CD4-positive, alpha-beta T cell (primary cell): ENCODE measurements at regions of chr22 and their contacts with region 1.

Region 1: DNA sequence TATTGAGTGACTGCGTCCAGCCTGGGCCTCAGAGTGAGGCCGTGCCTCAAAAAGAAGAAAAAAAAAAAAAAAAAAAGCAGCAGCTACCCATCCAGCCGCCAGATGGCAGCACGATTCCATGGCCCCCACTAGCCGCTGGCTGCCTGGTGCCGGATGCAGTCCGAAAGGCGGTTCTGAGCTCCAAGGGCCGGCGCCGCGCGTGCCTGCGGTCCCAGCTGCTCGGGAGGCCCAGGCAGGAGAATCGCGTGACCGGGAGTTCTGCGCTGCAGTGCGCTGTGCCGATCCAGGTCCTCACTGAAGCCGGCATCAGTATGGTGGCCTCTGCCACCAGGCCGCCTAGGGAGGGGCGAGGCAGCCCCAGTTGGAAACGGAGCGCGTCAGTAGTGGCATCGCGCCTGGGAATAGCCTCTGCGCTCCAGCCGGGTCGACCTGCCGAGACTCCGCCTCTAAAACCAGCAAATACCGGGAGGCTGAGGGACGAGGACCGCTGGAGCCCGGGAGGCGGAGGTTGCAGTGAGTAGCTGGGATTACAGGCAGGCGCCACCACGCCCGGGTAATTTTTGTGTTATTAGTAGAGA is 19.3 kb downstream of the SCARF2 start:
- DNase-seq: peak; percentile 58 to 90 (median 69)
- ATAC-seq: peak; percentile 84
- H3K4me3 ChIP-seq: peak overlapping the region; percentile 46
- H3K4me3 Mint-ChIP-seq: peak overlapping the region; percentile 60
- H3K27ac ChIP-seq: no peak overlapping the region
- H3K27ac Mint-ChIP-seq: no peak overlapping the region
- H3K4me1 ChIP-seq: peaks cover 10% of the 10 kb centered on the region
- H3K4me1 Mint-ChIP-seq: peaks cover under 1% of the 10 kb centered on the region
- H3K27me3 ChIP-seq: peaks cover 0 to 5% of the 10 kb centered on the region in 2 experiments
- H3K27me3 Mint-ChIP-seq: no peaks in the 10 kb centered on the region
- CTCF ChIP-seq: peak; percentile 92

Region 2: DNA sequence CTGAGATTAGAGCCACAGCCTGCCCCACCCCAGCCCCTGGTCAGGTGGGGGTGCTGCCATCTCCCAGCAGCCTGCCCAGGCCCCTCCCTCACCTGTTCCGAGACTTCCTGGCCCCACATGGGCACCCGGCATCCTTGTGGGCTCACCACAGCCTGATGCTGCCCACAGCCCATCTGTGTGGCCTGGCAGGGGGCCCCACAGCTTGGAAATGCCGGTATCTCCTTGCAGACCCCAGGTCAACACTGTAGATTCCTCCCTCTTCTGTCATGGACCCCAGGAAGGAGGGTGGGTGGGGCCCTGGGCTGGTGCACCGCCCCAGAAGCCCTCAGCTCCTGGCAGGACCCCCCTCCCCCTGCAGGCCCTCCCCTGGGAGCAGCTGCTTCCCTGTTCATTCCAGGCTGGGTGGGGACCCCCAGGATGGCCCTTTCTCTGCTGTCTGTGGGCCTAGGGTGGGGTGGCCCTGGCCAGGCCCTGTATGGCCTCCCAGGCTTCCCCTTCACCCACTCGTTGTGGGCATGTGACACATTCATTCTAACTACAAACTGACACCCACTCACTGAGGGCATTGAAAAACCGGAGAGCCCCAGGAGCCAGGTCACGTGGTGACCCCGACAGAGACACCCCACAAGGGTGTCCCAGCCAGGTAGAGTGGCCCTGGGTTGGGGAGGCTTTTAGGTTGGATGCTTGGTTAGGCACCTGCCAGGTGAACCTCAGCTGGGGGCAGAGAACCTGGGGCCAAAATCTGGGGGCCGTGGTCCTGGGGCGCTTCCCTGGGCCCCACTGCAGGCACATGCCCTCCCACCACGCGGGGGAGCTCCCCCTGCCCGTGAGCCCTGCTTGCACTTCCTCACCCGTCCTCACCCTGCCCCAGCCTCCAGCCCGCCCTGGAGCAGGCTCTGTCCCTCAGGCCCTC is 223.4 kb before region 1 on chr22:
- CTCF ChIA-PET with region 1: no interaction called
- POLR2A ChIA-PET with region 1: no interaction called
- intact Hi-C with region 1: no loop called
- DNase-seq: peak in 1 of 14 experiments; percentile 10
- ATAC-seq: no peak
- H3K4me3 ChIP-seq: no peak overlapping the region
- H3K4me3 Mint-ChIP-seq: no peak overlapping the region
- H3K27ac ChIP-seq: no peak overlapping the region
- H3K27ac Mint-ChIP-seq: no peak overlapping the region
- H3K4me1 ChIP-seq: peaks cover 2% of the 10 kb centered on the region
- H3K4me1 Mint-ChIP-seq: no peaks in the 10 kb centered on the region
- H3K27me3 ChIP-seq: no peaks in the 10 kb centered on the region
- H3K27me3 Mint-ChIP-seq: no peaks in the 10 kb centered on the region
- CTCF ChIP-seq: no peak

Region 3: DNA sequence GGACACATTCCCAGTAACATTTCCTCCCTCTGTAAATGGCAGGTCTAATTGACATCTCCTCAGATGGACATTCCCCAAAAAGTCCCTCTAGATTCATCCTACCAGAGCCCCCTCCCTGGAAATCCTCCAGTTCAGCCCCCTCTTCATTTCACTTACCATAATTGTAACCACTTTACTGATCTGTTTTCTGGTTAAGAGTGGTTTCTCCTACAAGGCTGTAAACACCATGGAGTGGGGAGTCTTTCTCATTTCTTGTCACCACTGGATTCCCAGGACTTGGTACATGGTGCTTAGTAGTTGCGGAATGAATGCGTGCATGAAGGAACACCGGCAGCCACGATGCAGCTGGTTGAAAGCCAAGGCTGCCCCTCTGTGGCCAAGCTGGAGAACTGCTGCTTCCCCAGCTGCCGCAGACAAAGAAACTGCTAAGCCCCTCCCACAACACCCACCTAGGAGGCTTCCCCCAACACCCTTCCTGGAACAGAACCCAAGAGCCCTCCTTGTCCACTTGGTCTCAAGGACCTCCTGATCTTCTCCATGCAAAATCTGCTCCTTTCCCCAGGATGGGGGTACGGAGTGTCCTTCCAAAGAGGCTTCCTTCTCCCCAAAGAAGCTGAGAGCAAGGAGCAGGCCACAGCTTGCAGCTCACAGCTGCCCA is 37.9 kb after region 1 on chr22:
- CTCF ChIA-PET with region 1: interaction called, 35 read pairs
- POLR2A ChIA-PET with region 1: interaction called, 13 read pairs
- intact Hi-C with region 1: loop called (anchors 1 kb)
- DNase-seq: peak; percentile 60 to 90 (median 70)
- ATAC-seq: peak; percentile 100
- H3K4me3 ChIP-seq: no peak overlapping the region
- H3K4me3 Mint-ChIP-seq: no peak overlapping the region
- H3K27ac ChIP-seq: no peak overlapping the region
- H3K27ac Mint-ChIP-seq: no peak overlapping the region
- H3K4me1 ChIP-seq: peaks cover 26% of the 10 kb centered on the region
- H3K4me1 Mint-ChIP-seq: peaks cover 39% of the 10 kb centered on the region
- H3K27me3 ChIP-seq: no peaks in the 10 kb centered on the region
- H3K27me3 Mint-ChIP-seq: no peaks in the 10 kb centered on the region
- CTCF ChIP-seq: peak; percentile 89

Region 4: GRCh38 chr22:20495861-20496681 is 77.8 kb after region 1 on chr22:
- CTCF ChIA-PET with region 1: interaction called, 6 read pairs
- POLR2A ChIA-PET with region 1: no interaction called
- intact Hi-C with region 1: loop called (anchors 1 kb)
- DNase-seq: peak; percentile 79 to 97 (median 88)
- ATAC-seq: peak; percentile 95
- H3K4me3 ChIP-seq: peak overlapping the region; percentile 91
- H3K4me3 Mint-ChIP-seq: peak overlapping the region; percentile 94
- H3K27ac ChIP-seq: peak overlapping the region; percentile 93 to 94
- H3K27ac Mint-ChIP-seq: peak overlapping the region; percentile 84
- H3K4me1 ChIP-seq: peaks cover 51% of the 10 kb centered on the region
- H3K4me1 Mint-ChIP-seq: peaks cover 50% of the 10 kb centered on the region
- H3K27me3 ChIP-seq: no peaks in the 10 kb centered on the region
- H3K27me3 Mint-ChIP-seq: no peaks in the 10 kb centered on the region
- CTCF ChIP-seq: peak; percentile 80

Region 5: GRCh38 chr22:20568989-20569769 is 150.9 kb after region 1 on chr22:
- CTCF ChIA-PET with region 1: interaction called, 6 read pairs
- POLR2A ChIA-PET with region 1: no interaction called
- intact Hi-C with region 1: loop called in 1 of 2 experiments (anchors 5 kb)
- DNase-seq: peak; percentile 74 to 95 (median 84)
- ATAC-seq: peak; percentile 59
- H3K4me3 ChIP-seq: peak overlapping the region; percentile 27
- H3K4me3 Mint-ChIP-seq: peak overlapping the region; percentile 83
- H3K27ac ChIP-seq: peak overlapping the region; percentile 29 to 57
- H3K27ac Mint-ChIP-seq: peak overlapping the region; percentile 93
- H3K4me1 ChIP-seq: peaks cover 87% of the 10 kb centered on the region
- H3K4me1 Mint-ChIP-seq: peaks cover 89% of the 10 kb centered on the region
- H3K27me3 ChIP-seq: no peaks in the 10 kb centered on the region
- H3K27me3 Mint-ChIP-seq: no peaks in the 10 kb centered on the region
- CTCF ChIP-seq: no peak

Region 6: GRCh38 chr22:20606041-20606783 is 187.9 kb after region 1 on chr22:
- CTCF ChIA-PET with region 1: no interaction called
- POLR2A ChIA-PET with region 1: no interaction called
- intact Hi-C with region 1: loop called in 1 of 2 experiments (anchors 2 kb)
- DNase-seq: peak; percentile 52 to 87 (median 66)
- ATAC-seq: peak; percentile 97
- H3K4me3 ChIP-seq: no peak overlapping the region
- H3K4me3 Mint-ChIP-seq: no peak overlapping the region
- H3K27ac ChIP-seq: no peak overlapping the region
- H3K27ac Mint-ChIP-seq: peak overlapping the region; percentile 59
- H3K4me1 ChIP-seq: peaks cover 15% of the 10 kb centered on the region
- H3K4me1 Mint-ChIP-seq: peaks cover 10% of the 10 kb centered on the region
- H3K27me3 ChIP-seq: no peaks in the 10 kb centered on the region
- H3K27me3 Mint-ChIP-seq: no peaks in the 10 kb centered on the region
- CTCF ChIP-seq: peak; percentile 75

Region 7: DNA sequence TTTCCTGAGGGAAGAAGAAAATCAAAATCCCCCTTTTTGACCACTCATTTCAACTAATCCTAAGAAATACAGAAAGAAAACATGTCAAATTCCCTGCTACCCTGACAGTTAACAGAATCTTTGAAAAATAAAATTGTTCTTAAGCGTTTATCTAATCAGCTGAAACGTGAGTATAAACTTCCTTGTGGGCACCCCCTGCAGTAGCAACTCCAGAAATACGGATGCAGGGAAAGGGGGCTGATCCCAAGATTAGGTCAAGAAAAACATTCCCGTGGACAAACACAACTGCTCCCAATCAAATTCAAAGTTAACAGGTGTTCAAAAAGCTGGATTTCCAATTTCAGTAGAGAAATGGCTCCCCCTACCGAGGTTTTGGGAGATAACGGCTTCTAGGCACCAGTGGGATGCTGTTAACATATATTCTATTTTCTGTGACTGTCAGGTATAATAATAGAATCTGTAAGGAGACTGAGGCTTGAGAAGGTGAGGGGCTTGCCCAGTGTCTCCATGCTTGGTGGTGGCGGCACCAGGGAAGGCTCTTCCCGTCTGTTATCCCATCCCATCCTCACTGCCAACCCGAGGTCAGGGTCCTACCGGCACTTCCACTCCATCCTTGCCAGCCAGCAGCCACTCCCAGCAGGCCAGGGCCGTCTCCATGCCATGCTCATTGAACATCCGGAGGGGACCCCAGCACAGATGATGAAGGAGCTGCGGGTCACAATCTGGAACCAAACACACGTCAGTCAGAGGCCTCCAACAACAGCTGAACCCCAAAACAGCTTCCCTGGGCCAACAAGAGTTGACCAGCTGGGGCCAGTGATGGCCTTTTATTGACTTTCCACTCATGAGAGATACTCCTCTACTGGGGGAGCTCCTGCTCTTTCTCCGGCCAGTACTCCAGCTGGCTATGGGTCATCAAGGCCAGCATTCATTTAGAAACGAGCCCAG is 323.6 kb after region 1 on chr22:
- CTCF ChIA-PET with region 1: interaction called, 7 read pairs
- POLR2A ChIA-PET with region 1: no interaction called
- intact Hi-C with region 1: loop called (anchors 1 to 2 kb)
- DNase-seq: peak in 12 of 14 experiments; percentile 9 to 67 (median 36)
- ATAC-seq: no peak
- H3K4me3 ChIP-seq: no peak overlapping the region
- H3K4me3 Mint-ChIP-seq: no peak overlapping the region
- H3K27ac ChIP-seq: no peak overlapping the region
- H3K27ac Mint-ChIP-seq: no peak overlapping the region
- H3K4me1 ChIP-seq: no peaks in the 10 kb centered on the region
- H3K4me1 Mint-ChIP-seq: peaks cover 5% of the 10 kb centered on the region
- H3K27me3 ChIP-seq: no peaks in the 10 kb centered on the region
- H3K27me3 Mint-ChIP-seq: no peaks in the 10 kb centered on the region
- CTCF ChIP-seq: peak; percentile 81